SK-N-SH (cell line): ENCODE measurements at regions of chr22 and their contacts with region 1.

Region 1: GRCh38 chr22:45994491-45995404 is 17.8 kb upstream of the WNT7B start:
- DNase-seq: peak; percentile 88
- H3K4me3 ChIP-seq: no peak overlapping the region
- H3K27ac ChIP-seq: peak overlapping the region; percentile 96 to 97; a peak in 3 of 4 replicates
- H3K4me1 ChIP-seq: peaks cover 30 to 53% of the 10 kb centered on the region in 2 experiments
- H3K27me3 ChIP-seq: no peaks in the 10 kb centered on the region
- CTCF ChIP-seq: peak; percentile 88
- EP300 ChIP-seq: no peak
- RAD21 ChIP-seq: peak; percentile 95

Region 2: GRCh38 chr22:45984316-45984916 is 10.3 kb before region 1 on chr22:
- CTCF ChIA-PET with region 1: interaction called, 29 read pairs
- POLR2A ChIA-PET with region 1: interaction called, 3 read pairs
- DNase-seq: no peak
- H3K4me3 ChIP-seq: no peak overlapping the region
- H3K27ac ChIP-seq: no peak overlapping the region
- H3K4me1 ChIP-seq: no peaks in the 10 kb centered on the region
- H3K27me3 ChIP-seq: no peaks in the 10 kb centered on the region
- CTCF ChIP-seq: no peak
- EP300 ChIP-seq: no peak
- RAD21 ChIP-seq: no peak

Region 3: DNA sequence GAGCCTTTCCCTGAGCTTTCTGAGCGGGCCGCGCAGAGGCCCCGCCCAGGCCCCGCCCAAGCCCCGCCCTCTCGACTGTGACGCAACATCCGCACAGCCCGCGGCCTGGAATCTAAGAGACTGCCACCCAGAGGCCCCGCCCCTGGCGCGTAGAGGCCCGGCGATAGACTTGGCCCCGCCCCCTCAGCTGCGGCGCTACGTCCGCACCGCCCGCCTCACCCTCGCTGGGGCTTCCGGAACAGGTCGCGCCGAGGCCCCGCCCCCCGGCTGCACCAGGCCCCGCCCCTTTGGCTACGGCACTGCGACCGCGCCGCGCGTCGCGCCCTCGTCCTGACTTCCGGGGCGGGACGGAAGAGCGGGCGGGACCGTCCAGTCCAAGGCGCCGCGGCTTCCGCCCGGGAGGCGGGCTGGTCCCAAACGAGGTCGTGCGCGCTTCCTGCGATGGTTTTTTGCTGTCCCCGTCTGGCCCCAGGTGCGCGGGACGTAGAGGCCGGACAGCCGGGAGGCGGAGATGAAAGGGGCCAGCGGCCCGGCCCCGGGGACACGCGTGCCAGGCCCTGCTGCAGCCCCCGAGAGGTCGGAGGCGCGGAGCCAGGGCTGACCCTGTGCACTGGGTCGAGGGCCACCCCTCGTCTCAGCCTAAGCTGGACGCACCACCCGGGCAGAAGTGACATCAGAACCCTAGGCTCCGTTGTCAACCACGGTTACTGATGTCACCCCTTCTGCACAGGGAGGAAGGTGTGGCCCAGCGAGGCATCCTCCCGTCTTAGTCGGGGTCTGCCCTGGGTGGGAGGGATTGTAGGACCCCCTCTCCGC is 41.2 kb after region 1 on chr22:
- CTCF ChIA-PET with region 1: interaction called, 17 read pairs
- POLR2A ChIA-PET with region 1: interaction called, 3 read pairs
- DNase-seq: peak; percentile 100
- H3K4me3 ChIP-seq: peak overlapping the region; percentile 88 to 91
- H3K27ac ChIP-seq: peak overlapping the region; percentile 89 to 95
- H3K4me1 ChIP-seq: peaks cover 0 to 35% of the 10 kb centered on the region in 2 experiments; a peak in 3 of 4 replicates
- H3K27me3 ChIP-seq: no peaks in the 10 kb centered on the region
- CTCF ChIP-seq: no peak
- EP300 ChIP-seq: no peak
- RAD21 ChIP-seq: no peak

Region 4: DNA sequence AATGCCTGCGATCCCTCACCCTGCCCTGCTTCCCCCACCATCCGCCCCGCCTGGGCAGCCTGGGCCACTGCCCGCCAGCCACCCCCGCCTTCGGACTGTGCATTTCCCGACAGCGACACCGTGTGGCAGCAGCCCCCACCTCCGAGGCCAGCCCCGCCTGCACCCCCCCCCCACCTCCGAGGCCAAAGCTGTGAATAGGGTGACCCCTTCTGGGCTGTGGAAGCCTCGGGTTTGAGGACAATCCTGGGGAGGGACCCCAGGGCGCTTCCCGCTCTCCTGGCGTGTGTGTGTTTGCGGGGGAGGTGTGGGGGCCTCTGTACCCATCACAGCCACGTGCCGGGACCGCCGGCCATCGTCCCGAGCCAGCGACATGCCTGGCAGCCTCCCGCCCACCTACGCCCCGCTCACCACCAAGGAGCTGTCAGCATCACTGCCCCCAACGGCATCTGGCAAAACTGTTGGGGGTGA is 121.8 kb after region 1 on chr22:
- CTCF ChIA-PET with region 1: interaction called, 107 read pairs
- POLR2A ChIA-PET with region 1: interaction called, 6 read pairs
- DNase-seq: peak; percentile 99
- H3K4me3 ChIP-seq: peak overlapping the region in 1 of 2 experiments; percentile 47; a peak in 1 of 4 replicates
- H3K27ac ChIP-seq: peak overlapping the region; percentile 63 to 70
- H3K4me1 ChIP-seq: peaks cover 0 to 74% of the 10 kb centered on the region in 2 experiments; a peak in 2 of 4 replicates
- H3K27me3 ChIP-seq: no peaks in the 10 kb centered on the region
- CTCF ChIP-seq: peak; percentile 73
- EP300 ChIP-seq: no peak
- RAD21 ChIP-seq: peak; percentile 80

Region 5: DNA sequence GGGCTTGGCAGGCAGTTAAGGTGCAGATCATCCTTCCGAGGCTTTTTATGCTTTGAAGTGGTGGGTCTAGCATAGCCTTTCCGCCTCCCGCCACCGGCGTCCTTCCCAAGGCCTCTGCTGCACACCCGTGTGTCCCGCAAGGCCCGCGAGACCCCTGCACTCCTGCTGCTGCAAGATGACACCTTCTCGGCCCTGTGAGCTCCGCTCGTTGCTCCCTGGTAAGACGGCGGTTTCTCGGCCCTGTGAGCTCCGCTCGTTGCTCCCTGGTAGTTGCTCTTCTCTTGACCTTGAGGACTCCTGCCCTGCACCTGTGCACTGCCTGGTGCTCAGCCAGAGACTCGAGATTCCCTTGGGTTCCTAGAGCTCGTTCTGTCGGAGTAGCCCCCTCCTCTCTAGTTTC is 322.9 kb after region 1 on chr22:
- CTCF ChIA-PET with region 1: interaction called, 14 read pairs
- POLR2A ChIA-PET with region 1: no interaction called
- DNase-seq: no peak
- H3K4me3 ChIP-seq: no peak overlapping the region
- H3K27ac ChIP-seq: no peak overlapping the region
- H3K4me1 ChIP-seq: no peaks in the 10 kb centered on the region; a peak in 1 of 4 replicates
- H3K27me3 ChIP-seq: no peaks in the 10 kb centered on the region
- CTCF ChIP-seq: no peak
- EP300 ChIP-seq: no peak
- RAD21 ChIP-seq: no peak